MCF 10A (cell line): ENCODE measurements at regions of chr5 and their contacts with region 1.

Region 1: DNA sequence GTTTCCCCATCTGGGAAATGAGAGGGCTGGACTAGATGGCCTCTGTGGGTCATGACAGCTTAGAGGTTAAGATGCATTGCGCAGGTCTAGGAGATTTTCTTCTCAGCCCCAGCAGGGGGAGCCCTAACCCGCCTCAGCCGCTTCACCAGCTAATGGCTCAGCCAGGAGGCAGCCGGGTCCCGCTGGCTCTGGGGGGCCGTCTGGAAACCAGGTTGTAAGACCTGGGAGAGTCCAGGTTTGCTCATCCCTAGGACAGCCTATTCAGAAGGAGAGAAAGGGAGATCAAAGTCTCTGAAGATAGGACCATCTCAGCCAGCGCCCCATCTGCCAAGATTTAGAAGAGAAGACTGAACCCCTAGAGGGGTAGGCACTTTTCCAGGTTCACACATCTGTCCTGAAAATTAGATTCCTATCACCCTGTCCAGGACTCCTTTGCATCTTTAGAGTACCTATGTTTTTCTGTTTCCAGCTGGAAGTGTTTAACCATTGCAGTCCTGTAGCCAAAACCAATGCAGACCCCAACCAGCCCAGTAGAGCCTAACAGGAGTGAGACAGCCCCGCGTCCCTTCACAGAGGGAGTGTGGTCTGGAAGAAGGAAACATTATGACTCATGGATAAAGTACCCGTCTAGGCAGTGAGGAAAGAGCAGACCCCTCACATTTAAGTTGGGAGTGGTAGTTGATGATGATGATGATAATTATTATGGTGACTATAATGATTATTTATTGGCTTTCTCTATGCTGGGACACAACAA is 27.5 kb downstream of the SPARC start:
- DNase-seq: peak; percentile 87
- H3K4me3 Mint-ChIP-seq: no peak overlapping the region
- H3K27ac Mint-ChIP-seq: no peak overlapping the region
- H3K4me1 Mint-ChIP-seq: peaks cover 22% of the 10 kb centered on the region
- H3K27me3 Mint-ChIP-seq: no peaks in the 10 kb centered on the region
- CTCF ChIP-seq: peak; percentile 98

Region 2: GRCh38 chr5:151492729-151493128 is 166.4 kb before region 1 on chr5:
- CTCF ChIA-PET with region 1: interaction called, 71 read pairs
- POLR2A ChIA-PET with region 1: no interaction called
- intact Hi-C with region 1: no loop called
- DNase-seq: peak; percentile 22
- H3K4me3 Mint-ChIP-seq: no peak overlapping the region
- H3K27ac Mint-ChIP-seq: no peak overlapping the region
- H3K4me1 Mint-ChIP-seq: no peaks in the 10 kb centered on the region
- H3K27me3 Mint-ChIP-seq: no peaks in the 10 kb centered on the region
- CTCF ChIP-seq: no peak

Region 3: DNA sequence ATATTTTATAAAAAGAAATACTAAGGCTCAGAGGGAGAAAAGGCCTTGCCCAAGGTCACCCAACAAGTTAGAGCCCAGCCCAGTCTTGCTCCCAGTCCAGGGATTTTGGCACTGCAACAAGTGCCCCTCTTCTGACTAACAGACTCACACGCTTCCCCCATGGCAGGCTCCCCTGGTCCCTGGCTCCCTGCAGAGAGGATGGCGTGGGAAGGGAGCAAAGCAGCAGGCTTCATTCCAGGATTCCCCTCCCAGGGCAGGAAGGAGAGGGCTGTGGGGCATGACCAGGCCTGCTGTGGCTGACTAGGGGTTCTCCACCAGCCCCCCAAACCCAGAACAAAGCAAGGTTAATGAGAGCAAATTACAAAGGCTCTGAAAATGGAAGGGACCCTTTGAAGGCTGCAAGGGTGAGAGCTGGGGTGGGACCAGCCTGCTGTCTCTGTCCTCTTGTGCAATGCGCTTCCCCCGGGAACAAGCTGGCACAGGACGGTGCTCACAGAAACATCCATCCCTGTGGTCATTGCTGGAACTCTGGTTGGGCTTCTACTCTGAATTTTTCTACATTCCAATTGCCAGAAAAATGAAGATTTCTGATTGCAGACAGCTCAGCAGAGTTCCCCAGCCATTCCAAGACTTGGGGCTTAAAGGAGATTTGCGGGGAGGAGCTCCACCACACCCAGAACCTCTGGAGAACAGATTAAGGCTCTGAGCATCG is 30.9 kb before region 1 on chr5:
- CTCF ChIA-PET with region 1: interaction called, 174 read pairs
- POLR2A ChIA-PET with region 1: interaction called, 3 read pairs
- intact Hi-C with region 1: no loop called
- DNase-seq: peak; percentile 99
- H3K4me3 Mint-ChIP-seq: no peak overlapping the region
- H3K27ac Mint-ChIP-seq: peak overlapping the region; percentile 50
- H3K4me1 Mint-ChIP-seq: peaks cover 53% of the 10 kb centered on the region
- H3K27me3 Mint-ChIP-seq: no peaks in the 10 kb centered on the region
- CTCF ChIP-seq: no peak

Region 4: DNA sequence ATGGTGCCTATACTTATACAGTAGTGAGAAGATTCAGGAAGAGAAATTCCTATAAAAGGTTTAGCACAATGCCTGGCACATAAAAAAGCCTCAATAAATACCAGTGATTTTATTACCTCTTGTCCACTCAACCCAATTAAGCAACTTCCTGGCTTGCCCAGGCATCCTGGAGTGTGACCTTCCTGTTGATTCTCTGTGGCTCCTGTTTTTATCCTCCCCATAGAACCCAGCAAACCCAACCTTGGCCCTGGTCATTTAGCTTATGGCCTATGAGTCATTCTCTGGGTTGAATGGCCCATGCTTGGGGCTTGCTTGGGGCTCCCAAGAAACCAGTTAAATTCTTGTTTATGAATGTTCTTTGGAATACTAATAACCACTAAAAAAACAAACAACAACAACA is 48.9 kb after region 1 on chr5:
- CTCF ChIA-PET with region 1: interaction called, 19 read pairs
- POLR2A ChIA-PET with region 1: interaction called, 3 read pairs
- intact Hi-C with region 1: no loop called
- DNase-seq: peak; percentile 47
- H3K4me3 Mint-ChIP-seq: no peak overlapping the region
- H3K27ac Mint-ChIP-seq: no peak overlapping the region
- H3K4me1 Mint-ChIP-seq: no peaks in the 10 kb centered on the region
- H3K27me3 Mint-ChIP-seq: no peaks in the 10 kb centered on the region
- CTCF ChIP-seq: no peak

Region 5: GRCh38 chr5:151751091-151751490 is 91.9 kb after region 1 on chr5:
- CTCF ChIA-PET with region 1: interaction called, 652 read pairs
- POLR2A ChIA-PET with region 1: no interaction called
- intact Hi-C with region 1: no loop called
- DNase-seq: peak; percentile 78
- H3K4me3 Mint-ChIP-seq: no peak overlapping the region
- H3K27ac Mint-ChIP-seq: peak overlapping the region; percentile 61
- H3K4me1 Mint-ChIP-seq: peaks cover 8% of the 10 kb centered on the region
- H3K27me3 Mint-ChIP-seq: no peaks in the 10 kb centered on the region
- CTCF ChIP-seq: no peak

Region 6: DNA sequence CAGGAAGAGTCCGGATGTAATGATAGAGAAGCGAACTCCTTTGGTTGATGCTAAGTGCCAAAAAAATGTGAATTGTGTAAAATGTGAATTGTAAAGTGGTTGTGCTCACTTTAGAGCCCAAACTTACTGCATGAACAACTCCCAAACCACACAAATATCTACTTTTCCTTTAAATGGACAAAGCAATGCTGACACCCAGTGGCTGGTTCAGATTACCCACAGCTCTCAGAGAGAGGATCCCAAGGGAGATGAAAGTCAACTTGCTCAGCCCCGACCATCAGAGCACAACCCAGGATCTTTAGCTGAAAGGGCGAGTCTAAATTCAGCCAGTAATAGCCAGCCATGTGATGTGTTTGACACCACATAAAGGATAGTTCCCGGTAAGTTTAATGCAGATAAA is 612.2 kb after region 1 on chr5:
- CTCF ChIA-PET with region 1: interaction called, 4 read pairs
- POLR2A ChIA-PET with region 1: no interaction called
- intact Hi-C with region 1: loop called (anchors 2 kb)
- DNase-seq: peak; percentile 59
- H3K4me3 Mint-ChIP-seq: no peak overlapping the region
- H3K27ac Mint-ChIP-seq: no peak overlapping the region
- H3K4me1 Mint-ChIP-seq: peaks cover 6% of the 10 kb centered on the region
- H3K27me3 Mint-ChIP-seq: peaks cover 24% of the 10 kb centered on the region
- CTCF ChIP-seq: peak; percentile 50